Aorta (tissue), 5 donors: ENCODE measurements at regions of chr12 and their contacts with region 1.

Region 1: GRCh38 chr12:60096727-60097126 is 500.9 kb downstream of the SLC16A7 start:
- DNase-seq: no peak
- ATAC-seq: no peak
- H3K4me3 ChIP-seq: no peak overlapping the region
- H3K27ac ChIP-seq: no peak overlapping the region
- H3K4me1 ChIP-seq: no peaks in the 10 kb centered on the region
- H3K27me3 ChIP-seq: no peaks in the 10 kb centered on the region

Region 2: DNA sequence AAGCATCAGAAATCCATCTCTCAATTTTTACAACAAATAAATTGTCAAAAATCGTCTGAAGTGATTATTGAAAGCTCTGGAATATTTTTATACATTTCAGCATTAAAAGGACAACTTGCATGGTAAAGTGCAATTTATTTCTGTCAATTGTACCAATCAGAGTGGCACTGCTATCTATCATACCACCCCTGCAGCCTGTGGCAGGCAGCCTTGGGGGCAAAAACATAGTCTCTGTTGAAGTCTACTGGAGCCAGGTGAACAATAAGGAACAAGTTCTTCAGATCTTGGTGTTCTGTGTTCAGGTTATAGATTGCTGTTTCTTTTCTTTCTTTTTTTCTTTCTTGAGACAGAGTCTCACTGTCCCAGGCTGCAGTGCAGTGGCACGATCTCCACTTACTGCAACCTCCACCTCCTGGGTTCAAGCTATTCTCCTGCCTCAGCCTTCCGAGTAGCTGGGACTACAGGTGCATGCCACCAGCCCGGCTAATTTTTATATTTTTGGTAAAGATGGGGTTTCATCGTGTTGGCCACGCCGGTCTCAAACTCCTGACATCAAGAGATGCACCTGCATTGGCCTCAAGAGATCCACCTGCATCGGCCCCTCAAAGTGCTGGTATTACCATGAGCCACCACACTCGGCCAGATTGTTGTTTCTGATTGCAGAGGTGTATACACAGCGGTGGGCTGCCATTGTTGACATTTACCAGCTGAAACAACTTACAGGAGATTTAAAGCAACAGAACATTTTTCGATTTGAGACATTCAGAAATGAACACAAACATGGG is 128.7 kb after region 1 on chr12:
- intact Hi-C with region 1: loop called in 1 of 2 experiments (anchors 2 kb)
- DNase-seq: no peak
- ATAC-seq: no peak
- H3K4me3 ChIP-seq: no peak overlapping the region
- H3K27ac ChIP-seq: no peak overlapping the region
- H3K4me1 ChIP-seq: no peaks in the 10 kb centered on the region
- H3K27me3 ChIP-seq: no peaks in the 10 kb centered on the region